ENCODE measurements at regions of chr10 and their contacts with region 1.

Region 1: GRCh38 chr10:30467651-30468338 is 33.8 kb downstream of the MAP3K8 start:
- DNase-seq: peak; percentile 53
- H3K4me3 ChIP-seq: peak overlapping the region; percentile 18
- H3K27ac ChIP-seq: no peak overlapping the region
- H3K4me1 ChIP-seq: peaks cover 12% of the 10 kb centered on the region
- CTCF ChIP-seq: no peak

Region 2: DNA sequence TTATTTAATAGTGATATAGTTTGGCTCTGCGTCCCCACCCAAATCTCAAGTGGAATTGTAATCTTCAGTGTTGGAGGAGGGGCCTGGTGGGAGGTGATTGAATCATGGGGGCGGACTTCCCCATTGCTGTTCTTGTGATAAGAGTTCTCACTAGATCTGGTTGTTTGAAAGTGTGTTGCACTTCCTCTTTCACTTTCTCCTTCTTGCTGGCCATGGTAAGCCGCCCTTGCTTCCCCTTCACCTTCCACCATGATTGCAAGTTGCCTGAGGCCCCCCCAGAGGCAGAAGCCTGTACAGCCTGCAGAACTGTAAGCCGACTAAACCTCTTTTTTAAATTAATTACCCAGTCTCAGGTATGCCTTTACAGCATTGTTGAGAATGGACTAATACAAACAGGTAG is 220.1 kb before region 1 on chr10:
- CTCF ChIA-PET with region 1: no interaction called
- POLR2A ChIA-PET with region 1: no interaction called
- intact Hi-C with region 1: no loop called
- DNase-seq: peak; percentile 48
- H3K4me3 ChIP-seq: no peak overlapping the region
- H3K27ac ChIP-seq: no peak overlapping the region
- H3K4me1 ChIP-seq: no peaks in the 10 kb centered on the region
- CTCF ChIP-seq: 0 out of 2 replicates have a peak, but pooled peaks have one; percentile 27

Region 3: GRCh38 chr10:30456266-30456665 is 11.5 kb before region 1 on chr10:
- CTCF ChIA-PET with region 1: no interaction called
- POLR2A ChIA-PET with region 1: interaction called, 18 read pairs
- intact Hi-C with region 1: no loop called
- DNase-seq: peak; percentile 83
- H3K4me3 ChIP-seq: peak overlapping the region; percentile 45
- H3K27ac ChIP-seq: peak overlapping the region; percentile 72
- H3K4me1 ChIP-seq: peaks cover 26% of the 10 kb centered on the region
- CTCF ChIP-seq: no peak

Region 4: DNA sequence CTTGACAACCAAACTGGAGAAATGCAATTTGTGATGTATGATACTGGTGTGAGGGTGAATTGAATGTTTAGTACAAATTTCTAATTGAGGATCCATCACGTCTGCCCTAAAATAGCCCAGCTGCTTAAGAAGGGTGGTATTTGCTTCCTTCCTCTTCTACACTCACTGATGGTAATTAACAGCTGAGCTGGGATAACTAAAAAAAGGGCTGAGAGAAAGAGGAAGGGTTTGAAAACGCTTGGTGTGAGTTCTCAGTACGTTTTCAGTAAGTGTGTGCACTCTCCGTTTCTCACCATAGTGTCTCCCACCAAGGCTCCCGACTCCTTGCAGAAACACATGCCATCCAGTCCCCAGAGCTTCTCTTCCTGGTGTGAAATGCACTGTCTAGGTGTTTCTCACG is 20.5 kb after region 1 on chr10:
- CTCF ChIA-PET with region 1: no interaction called
- POLR2A ChIA-PET with region 1: interaction called, 10 read pairs
- intact Hi-C with region 1: no loop called
- DNase-seq: peak; percentile 66
- H3K4me3 ChIP-seq: peak overlapping the region; percentile 36
- H3K27ac ChIP-seq: peak overlapping the region; percentile 55
- H3K4me1 ChIP-seq: peaks cover 59% of the 10 kb centered on the region
- CTCF ChIP-seq: no peak

Measured in OCI-LY7 (cell line).